ENCODE measurements at regions of chr18 and their contacts with region 1.

Region 1: DNA sequence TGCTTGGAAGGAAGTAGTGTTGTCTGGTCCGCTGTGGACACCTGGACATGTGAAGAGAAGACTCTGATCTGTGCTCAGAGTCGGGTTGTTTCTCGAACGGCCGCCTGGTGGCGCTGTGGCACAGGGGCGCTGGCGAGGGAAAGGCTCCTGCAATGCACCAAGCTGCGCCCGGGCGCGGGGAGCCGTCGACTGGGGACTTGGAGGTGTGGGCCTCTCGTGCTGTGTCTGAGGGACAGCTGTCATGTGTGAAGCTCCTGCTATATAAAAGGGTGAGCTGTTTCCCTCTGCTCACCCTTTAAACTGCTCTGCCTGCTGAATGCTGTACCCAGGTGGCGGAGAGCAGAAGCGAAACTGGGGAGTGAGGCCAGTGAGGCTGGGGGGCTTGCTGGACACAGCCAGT is 44.0 kb downstream of the GNAL start:
- DNase-seq: peak; percentile 55
- H3K4me3 Mint-ChIP-seq: no peak overlapping the region
- H3K27ac Mint-ChIP-seq: no peak overlapping the region
- H3K4me1 Mint-ChIP-seq: no peaks in the 10 kb centered on the region
- H3K27me3 Mint-ChIP-seq: peaks cover 36% of the 10 kb centered on the region

Region 2: DNA sequence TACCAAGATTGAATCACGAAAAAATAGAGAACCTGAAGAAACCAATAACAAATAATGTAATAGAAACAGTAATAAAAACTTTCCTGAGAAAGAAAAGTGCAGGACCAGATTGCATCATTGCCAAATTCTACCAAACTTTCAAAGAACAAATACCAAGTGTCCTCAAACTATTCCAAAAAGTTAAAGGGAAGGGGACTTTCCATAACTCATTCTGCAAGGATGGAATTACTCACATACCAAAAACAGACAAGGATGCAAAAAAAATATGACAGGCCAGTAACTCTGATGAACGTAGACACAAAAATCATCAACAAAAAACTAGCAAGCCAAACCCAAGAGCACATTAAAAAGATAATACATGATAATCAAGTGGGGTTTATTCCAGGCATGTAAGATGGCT is 296.0 kb before region 1 on chr18:
- intact Hi-C with region 1: no loop called
- DNase-seq: no peak
- H3K4me3 Mint-ChIP-seq: no peak overlapping the region
- H3K27ac Mint-ChIP-seq: no peak overlapping the region
- H3K4me1 Mint-ChIP-seq: no peaks in the 10 kb centered on the region
- H3K27me3 Mint-ChIP-seq: no peaks in the 10 kb centered on the region

Region 3: DNA sequence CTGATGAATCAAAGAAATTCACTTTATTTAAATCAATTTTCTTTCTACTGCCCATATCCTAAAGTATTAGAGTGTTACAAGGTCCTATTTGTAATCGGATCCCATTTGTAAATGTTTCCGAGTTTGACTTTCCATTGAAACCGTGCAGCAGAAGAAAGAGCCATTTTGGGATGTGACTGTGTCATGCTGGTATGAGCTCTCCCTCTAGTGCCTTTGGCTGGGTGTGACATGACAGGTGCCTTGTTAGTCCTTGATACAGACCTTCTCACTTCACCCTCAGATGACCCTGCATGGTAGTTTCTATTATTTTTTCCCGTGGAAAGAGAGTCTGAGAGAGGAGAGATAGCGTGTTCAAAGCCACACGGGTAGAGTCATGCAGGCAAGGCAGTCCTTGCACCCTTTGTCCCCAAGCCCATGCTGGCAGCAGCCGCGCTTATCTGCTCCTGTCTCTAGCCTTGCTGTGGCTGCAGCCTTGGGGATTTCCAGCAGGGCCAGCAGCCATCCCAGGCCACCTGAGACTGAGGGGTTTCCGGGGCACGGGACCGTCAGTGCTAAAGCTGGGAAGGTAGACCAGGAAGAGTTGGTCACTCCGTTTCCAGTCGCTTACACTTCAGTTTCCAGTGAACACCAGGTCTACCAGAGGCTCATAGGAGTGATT is 139.6 kb after region 1 on chr18:
- intact Hi-C with region 1: loop called (anchors 1 kb)
- DNase-seq: no peak
- H3K4me3 Mint-ChIP-seq: no peak overlapping the region
- H3K27ac Mint-ChIP-seq: no peak overlapping the region
- H3K4me1 Mint-ChIP-seq: peaks cover 2% of the 10 kb centered on the region
- H3K27me3 Mint-ChIP-seq: peaks cover 5% of the 10 kb centered on the region

Region 4: GRCh38 chr18:11937874-11938478 is 204.9 kb after region 1 on chr18:
- intact Hi-C with region 1: loop called (anchors 5 kb)
- DNase-seq: peak; percentile 53
- H3K4me3 Mint-ChIP-seq: no peak overlapping the region
- H3K27ac Mint-ChIP-seq: no peak overlapping the region
- H3K4me1 Mint-ChIP-seq: no peaks in the 10 kb centered on the region
- H3K27me3 Mint-ChIP-seq: no peaks in the 10 kb centered on the region

Region 5: DNA sequence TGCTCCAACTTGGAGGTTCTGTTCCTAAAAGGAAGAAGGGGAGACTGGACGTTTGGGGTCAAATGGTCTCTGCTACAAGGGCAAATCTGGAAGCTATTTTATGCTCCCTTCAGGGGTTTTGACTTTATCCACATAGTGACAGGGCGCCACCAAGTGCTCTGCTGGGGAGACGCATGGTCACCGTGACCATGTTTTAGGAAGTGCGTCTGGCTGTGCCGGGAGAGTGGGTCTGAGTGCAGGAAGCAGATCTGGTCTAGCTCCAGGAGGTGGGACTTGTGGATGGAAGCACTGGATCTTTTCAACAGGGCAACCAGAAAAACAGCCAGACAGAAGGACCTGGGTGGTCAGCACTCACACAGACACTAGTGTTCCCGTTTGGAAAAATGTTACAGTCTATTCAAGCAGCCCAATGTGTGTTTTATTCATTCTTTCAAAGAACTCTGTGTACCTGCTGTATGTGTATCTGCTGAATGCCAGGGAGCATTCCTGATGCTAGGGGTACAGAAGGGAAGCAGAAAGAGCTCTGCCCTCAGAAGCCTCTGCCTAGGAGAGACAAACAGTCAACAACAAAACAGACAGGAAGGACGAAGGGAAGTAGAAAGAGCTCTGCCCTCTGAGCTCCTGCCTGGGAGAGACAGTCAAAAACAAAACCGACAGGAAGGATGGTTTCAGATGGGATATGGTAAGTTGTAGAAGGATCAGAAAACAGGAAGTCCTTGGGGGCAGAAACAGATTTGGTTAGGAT is 262.6 kb after region 1 on chr18:
- intact Hi-C with region 1: loop called (anchors 2 kb)
- DNase-seq: peak; percentile 32
- H3K4me3 Mint-ChIP-seq: no peak overlapping the region
- H3K27ac Mint-ChIP-seq: peak overlapping the region; percentile 18
- H3K4me1 Mint-ChIP-seq: peaks cover 11% of the 10 kb centered on the region
- H3K27me3 Mint-ChIP-seq: no peaks in the 10 kb centered on the region

Region 6: GRCh38 chr18:12038639-12039417 is 305.8 kb after region 1 on chr18:
- intact Hi-C with region 1: loop called (anchors 1 kb)
- DNase-seq: peak; percentile 68
- H3K4me3 Mint-ChIP-seq: peak overlapping the region; percentile 69
- H3K27ac Mint-ChIP-seq: no peak overlapping the region
- H3K4me1 Mint-ChIP-seq: peaks cover 27% of the 10 kb centered on the region
- H3K27me3 Mint-ChIP-seq: peaks cover 4% of the 10 kb centered on the region

Measured in activated T-helper 2 cell treated with anti-CD3 and anti-CD28 coated beads, Interferon-gamma antibody, Interleukin-2, Interleukin-4, amounts not matched to agents 10 μg/mL and 5 μg/mL and 100 μg/mL, durations not matched to agents 14 hours and 24 hours and 36 hours (primary cell).